Mucosa of descending colon (tissue), 3 donors: ENCODE measurements at regions of chr2 and their contacts with region 1.

Region 1: DNA sequence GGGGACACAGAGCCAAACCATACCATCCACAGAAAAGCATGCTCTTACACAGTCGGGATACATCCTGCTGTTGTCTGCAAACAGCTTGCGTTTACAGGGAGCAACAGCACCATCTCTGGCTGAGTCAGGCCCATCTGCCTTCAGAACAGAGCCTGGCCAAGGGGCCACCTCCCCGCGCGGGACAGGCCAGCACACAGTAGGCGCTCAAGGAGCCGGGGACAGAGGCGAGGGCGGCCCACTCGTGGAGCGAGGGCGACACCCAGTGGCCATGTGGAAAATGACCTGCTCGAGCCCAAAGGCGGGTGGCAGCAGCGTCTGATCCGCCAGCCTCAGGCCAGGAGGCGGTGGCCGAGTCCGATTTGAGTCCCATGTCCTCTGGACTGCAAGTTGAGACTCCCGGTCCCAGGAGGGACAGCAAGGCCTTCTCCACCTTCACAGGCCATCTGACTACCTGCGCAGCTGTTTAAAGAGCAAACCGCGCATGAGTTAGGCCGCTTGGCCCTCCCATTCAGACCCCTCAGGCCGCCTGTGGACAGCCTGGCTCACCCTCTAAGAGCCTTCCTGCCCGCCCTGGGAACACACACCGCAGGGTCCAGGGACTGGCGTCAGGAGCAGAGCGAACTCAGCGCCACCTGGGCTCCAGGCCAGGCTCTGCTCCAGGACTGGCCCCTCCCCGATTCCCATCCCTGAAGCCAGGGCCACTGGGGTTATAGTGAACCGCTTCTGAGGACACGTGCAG is 38.3 kb downstream of the TTC32 start:
- DNase-seq: peak; percentile 70 to 78 (median 77)
- ATAC-seq: peak; percentile 88
- H3K4me3 ChIP-seq: no peak overlapping the region
- H3K4me1 ChIP-seq: peaks cover 7% of the 10 kb centered on the region
- CTCF ChIP-seq: peak; percentile 85

Region 2: GRCh38 chr2:18398833-18399232 is 1464.6 kb before region 1 on chr2:
- intact Hi-C with region 1: loop called in 1 of 2 experiments (anchors 10 kb)
- DNase-seq: no peak
- ATAC-seq: no peak
- H3K4me3 ChIP-seq: no peak overlapping the region
- H3K4me1 ChIP-seq: no peaks in the 10 kb centered on the region
- CTCF ChIP-seq: no peak

Region 3: GRCh38 chr2:18520451-18521425 is 1342.7 kb before region 1 on chr2:
- intact Hi-C with region 1: loop called in 1 of 2 experiments (anchors 5 kb)
- DNase-seq: peak; percentile 71 to 91 (median 86)
- ATAC-seq: peak; percentile 83
- H3K4me3 ChIP-seq: no peak overlapping the region
- H3K4me1 ChIP-seq: no peaks in the 10 kb centered on the region
- CTCF ChIP-seq: peak; percentile 70

Region 4: DNA sequence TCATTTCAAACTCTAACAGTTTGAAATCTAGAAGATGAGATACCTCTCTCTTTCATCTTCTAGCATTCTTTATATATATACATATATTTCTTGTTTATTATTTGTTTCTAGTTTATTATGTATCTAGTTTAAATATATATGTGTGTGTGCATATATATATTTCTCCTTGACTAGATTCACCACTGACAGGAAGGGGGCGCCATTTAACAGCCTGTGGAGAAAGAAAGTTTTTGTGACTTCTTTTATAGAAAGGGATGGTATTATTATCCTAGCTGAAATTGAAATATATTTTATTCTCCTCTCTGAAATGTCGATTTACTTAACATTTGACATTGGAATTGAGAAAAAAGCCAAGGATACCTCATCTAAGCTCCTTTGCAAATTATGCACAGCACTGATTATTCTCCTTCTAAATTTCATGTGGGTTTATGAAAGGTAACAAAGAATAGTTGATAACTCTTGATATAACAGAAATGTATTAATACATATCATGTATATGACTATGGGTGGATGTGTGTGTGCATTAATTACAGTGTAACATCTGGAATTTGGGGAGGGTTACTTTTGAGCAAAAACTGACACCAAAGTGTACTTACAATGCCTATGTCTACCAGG is 1113.5 kb before region 1 on chr2:
- intact Hi-C with region 1: loop called in 1 of 2 experiments (anchors 5 kb)
- DNase-seq: peak in 1 of 3 donors; percentile 84
- ATAC-seq: peak; percentile 55
- H3K4me3 ChIP-seq: no peak overlapping the region
- H3K4me1 ChIP-seq: peaks cover 8% of the 10 kb centered on the region
- CTCF ChIP-seq: peak; percentile 30

Region 5: GRCh38 chr2:19349911-19350677 is 513.4 kb before region 1 on chr2:
- intact Hi-C with region 1: loop called in 1 of 2 experiments (anchors 5 kb)
- DNase-seq: peak; percentile 65 to 81 (median 78)
- ATAC-seq: peak; percentile 57
- H3K4me3 ChIP-seq: no peak overlapping the region
- H3K4me1 ChIP-seq: peaks cover 16% of the 10 kb centered on the region
- CTCF ChIP-seq: peak; percentile 76